Endothelial cell of umbilical vein (primary cell): ENCODE measurements at regions of chr4 and their contacts with region 1.

Region 1: GRCh38 chr4:73036123-73036522 is 33.4 kb downstream of the COX18 start:
- DNase-seq: no peak
- H3K4me3 ChIP-seq: no peak overlapping the region
- H3K27ac ChIP-seq: no peak overlapping the region
- H3K4me1 ChIP-seq: no peaks in the 10 kb centered on the region
- H3K27me3 ChIP-seq: peaks cover 0 to 3% of the 10 kb centered on the region in 2 experiments
- CTCF ChIP-seq: no peak
- POLR2A ChIP-seq: no peak

Region 2: DNA sequence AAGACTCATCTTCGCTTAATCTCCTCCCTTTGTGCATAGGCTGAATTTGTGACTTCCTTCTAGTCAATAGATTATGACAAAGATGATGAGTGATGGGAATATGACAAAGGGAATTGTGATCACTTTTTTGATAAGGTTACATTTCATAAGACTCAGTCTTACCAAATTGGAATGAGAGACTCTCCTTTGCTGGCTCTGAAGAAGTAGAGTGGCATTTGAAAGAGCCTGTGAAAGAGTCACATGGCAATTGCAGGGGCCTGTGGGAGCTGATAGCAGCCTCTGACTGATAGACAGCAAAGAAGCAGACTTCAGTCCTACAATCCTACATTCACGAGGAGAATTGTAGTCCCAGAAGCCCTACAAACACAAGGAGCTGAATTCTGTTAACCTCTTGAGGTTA is 422.2 kb before region 1 on chr4:
- CTCF ChIA-PET with region 1: no interaction called
- POLR2A ChIA-PET with region 1: no interaction called
- dilution Hi-C with region 1: no loop called
- intact Hi-C with region 1: no loop called
- DNase-seq: no peak
- H3K4me3 ChIP-seq: no peak overlapping the region
- H3K27ac ChIP-seq: no peak overlapping the region
- H3K4me1 ChIP-seq: no peaks in the 10 kb centered on the region
- H3K27me3 ChIP-seq: no peaks in the 10 kb centered on the region
- CTCF ChIP-seq: no peak
- POLR2A ChIP-seq: no peak

Region 3: DNA sequence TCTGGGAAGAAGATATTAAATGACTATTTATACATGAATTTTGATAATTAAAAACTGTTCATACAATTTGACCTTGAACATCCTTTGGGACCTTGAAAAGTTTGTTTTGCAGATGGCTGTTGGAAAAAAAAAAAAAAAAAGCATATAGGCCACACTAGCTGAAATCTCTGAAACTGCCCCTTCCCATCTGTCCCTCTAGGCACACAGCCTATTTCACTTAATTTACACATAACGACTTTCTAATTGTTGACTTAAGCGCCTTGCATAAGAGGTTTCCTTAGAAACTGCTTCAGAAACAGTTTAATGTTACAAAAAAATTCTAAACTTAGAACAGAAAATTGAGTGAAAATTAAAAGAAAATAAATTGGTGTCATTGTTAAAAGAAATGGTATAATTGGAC is 97.6 kb before region 1 on chr4:
- CTCF ChIA-PET with region 1: no interaction called
- POLR2A ChIA-PET with region 1: no interaction called
- dilution Hi-C with region 1: no loop called
- intact Hi-C with region 1: no loop called
- DNase-seq: no peak
- H3K4me3 ChIP-seq: no peak overlapping the region
- H3K27ac ChIP-seq: no peak overlapping the region
- H3K4me1 ChIP-seq: peaks cover 3% of the 10 kb centered on the region
- H3K27me3 ChIP-seq: no peaks in the 10 kb centered on the region
- CTCF ChIP-seq: no peak
- POLR2A ChIP-seq: no peak

Region 4: DNA sequence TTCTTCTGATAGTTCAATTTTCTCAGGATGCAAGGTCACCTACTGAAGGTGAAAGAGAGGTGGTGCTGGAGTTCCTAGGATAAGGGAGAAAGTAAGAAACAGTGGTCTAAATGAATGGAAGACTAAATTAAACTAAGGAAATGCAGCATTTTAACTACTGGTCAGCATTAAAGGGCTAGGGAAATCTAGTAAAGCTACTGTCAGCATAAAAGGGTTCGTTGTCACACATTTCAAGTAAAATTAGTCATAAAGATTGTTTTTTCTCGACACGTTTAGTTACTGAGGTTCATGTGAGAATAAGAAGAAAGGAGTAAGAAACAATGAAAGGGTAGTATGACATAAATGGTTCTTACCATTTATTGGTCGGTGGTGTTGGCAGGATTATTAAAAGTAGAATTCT is 73.4 kb after region 1 on chr4:
- CTCF ChIA-PET with region 1: no interaction called
- POLR2A ChIA-PET with region 1: no interaction called
- dilution Hi-C with region 1: no loop called
- intact Hi-C with region 1: no loop called
- DNase-seq: no peak
- H3K4me3 ChIP-seq: no peak overlapping the region
- H3K27ac ChIP-seq: no peak overlapping the region
- H3K4me1 ChIP-seq: no peaks in the 10 kb centered on the region
- H3K27me3 ChIP-seq: no peaks in the 10 kb centered on the region
- CTCF ChIP-seq: no peak
- POLR2A ChIP-seq: no peak

Region 5: DNA sequence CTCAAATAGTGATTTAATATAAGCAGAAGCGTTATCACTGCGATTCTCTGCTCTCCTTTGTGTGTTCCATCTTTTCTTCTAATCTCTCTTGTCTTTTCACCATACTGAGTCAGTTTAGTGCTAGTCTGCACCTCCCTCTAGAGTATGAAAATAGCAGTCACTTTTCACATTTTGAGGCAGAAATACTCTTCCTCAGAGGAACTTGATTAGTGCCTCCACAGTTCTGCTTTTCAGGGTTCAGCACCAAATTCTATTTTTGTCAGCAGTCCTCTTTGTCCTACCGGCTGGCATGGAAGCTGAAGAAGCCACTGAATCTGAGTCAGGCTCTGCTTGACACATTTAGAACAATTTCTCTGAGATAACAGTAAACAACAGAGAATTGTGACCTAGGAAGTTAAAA is 272.2 kb after region 1 on chr4:
- CTCF ChIA-PET with region 1: interaction called, 12 read pairs
- POLR2A ChIA-PET with region 1: no interaction called
- dilution Hi-C with region 1: no loop called
- intact Hi-C with region 1: no loop called
- DNase-seq: peak; percentile 20
- H3K4me3 ChIP-seq: no peak overlapping the region
- H3K27ac ChIP-seq: no peak overlapping the region
- H3K4me1 ChIP-seq: peaks cover 2% of the 10 kb centered on the region
- H3K27me3 ChIP-seq: peaks cover 0 to 2% of the 10 kb centered on the region in 2 experiments
- CTCF ChIP-seq: no peak
- POLR2A ChIP-seq: no peak

Region 6: DNA sequence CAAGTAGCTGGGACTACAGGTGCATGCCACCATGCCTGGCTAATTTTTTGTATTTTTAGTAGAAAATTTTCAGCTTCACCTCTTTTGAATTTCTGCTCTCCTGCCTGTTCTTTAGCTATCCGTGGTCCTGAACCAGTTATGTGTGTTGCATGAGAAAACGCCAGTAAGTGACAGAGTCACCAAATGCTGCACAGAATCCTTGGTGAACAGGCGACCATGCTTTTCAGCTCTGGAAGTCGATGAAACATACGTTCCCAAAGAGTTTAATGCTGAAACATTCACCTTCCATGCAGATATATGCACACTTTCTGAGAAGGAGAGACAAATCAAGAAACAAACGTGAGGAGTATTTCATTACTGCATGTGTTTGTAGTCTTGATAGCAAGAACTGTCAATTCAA is 381.9 kb after region 1 on chr4:
- CTCF ChIA-PET with region 1: no interaction called
- POLR2A ChIA-PET with region 1: no interaction called
- dilution Hi-C with region 1: no loop called
- intact Hi-C with region 1: no loop called
- DNase-seq: no peak
- H3K4me3 ChIP-seq: no peak overlapping the region
- H3K27ac ChIP-seq: no peak overlapping the region
- H3K4me1 ChIP-seq: no peaks in the 10 kb centered on the region
- H3K27me3 ChIP-seq: peaks cover 2% of the 10 kb centered on the region in 2 experiments
- CTCF ChIP-seq: no peak
- POLR2A ChIP-seq: no peak